ENCODE measurements at regions of chr16 and their contacts with region 1.

Region 1: GRCh38 chr16:22077700-22078313 is 14.5 kb upstream of the VWA3A start:
- DNase-seq: peak; percentile 66

Region 2: GRCh38 chr16:22007509-22008214 is 70.1 kb before region 1 on chr16 and contains the start of gene MOSMO:
- CTCF ChIA-PET with region 1: interaction called, 23 read pairs
- POLR2A ChIA-PET with region 1: interaction called, 20 read pairs
- DNase-seq: peak; percentile 71

Region 3: GRCh38 chr16:22055878-22056277 is 21.9 kb before region 1 on chr16:
- CTCF ChIA-PET with region 1: interaction called, 11 read pairs
- POLR2A ChIA-PET with region 1: no interaction called
- DNase-seq: peak; percentile 50

Region 4: GRCh38 chr16:22091758-22092600 is 14.2 kb after region 1 on chr16 and contains the start of gene VWA3A:
- CTCF ChIA-PET with region 1: interaction called, 10 read pairs
- POLR2A ChIA-PET with region 1: no interaction called
- DNase-seq: peak; percentile 50

Region 5: DNA sequence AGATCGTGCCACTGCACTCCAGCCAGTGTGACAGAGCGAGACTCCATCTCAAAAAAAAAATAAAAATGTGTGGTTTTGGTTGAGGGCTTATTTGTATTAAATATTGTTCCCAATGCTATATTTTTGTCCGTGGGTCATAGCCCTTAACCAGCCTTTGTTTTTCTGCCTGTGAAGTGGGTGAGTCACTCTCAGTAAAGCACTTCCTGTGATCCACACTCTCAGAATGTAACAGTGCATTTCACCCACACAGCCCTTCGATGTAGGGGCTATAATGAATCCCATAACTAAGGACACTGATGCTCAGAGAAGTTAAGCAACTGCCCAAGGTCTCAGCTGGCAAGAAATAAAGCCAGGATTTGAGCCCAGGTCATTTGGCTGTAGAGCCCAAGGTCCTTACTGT is 184.7 kb after region 1 on chr16:
- CTCF ChIA-PET with region 1: no interaction called
- POLR2A ChIA-PET with region 1: no interaction called
- DNase-seq: no peak

Measured in HEK293T (cell line).